MCF 10A (cell line): ENCODE measurements at regions of chr6 and their contacts with region 1.

Region 1: GRCh38 chr6:170224694-170225660 is 65.9 kb downstream of the DLL1 start:
- DNase-seq: peak; percentile 94
- H3K4me3 Mint-ChIP-seq: peak overlapping the region; percentile 60
- H3K27ac Mint-ChIP-seq: peak overlapping the region; percentile 81
- H3K4me1 Mint-ChIP-seq: peaks cover 51% of the 10 kb centered on the region
- H3K27me3 Mint-ChIP-seq: no peaks in the 10 kb centered on the region
- CTCF ChIP-seq: no peak

Region 2: GRCh38 chr6:170178561-170179477 is 46.2 kb before region 1 on chr6:
- CTCF ChIA-PET with region 1: interaction called, 4 read pairs
- POLR2A ChIA-PET with region 1: interaction called, 43 read pairs
- intact Hi-C with region 1: loop called (anchors 1 kb)
- DNase-seq: peak; percentile 97
- H3K4me3 Mint-ChIP-seq: peak overlapping the region; percentile 20
- H3K27ac Mint-ChIP-seq: peak overlapping the region; percentile 83
- H3K4me1 Mint-ChIP-seq: peaks cover 13% of the 10 kb centered on the region
- H3K27me3 Mint-ChIP-seq: peaks cover 22% of the 10 kb centered on the region
- CTCF ChIP-seq: no peak

Region 3: GRCh38 chr6:170271771-170272314 is 46.9 kb after region 1 on chr6:
- CTCF ChIA-PET with region 1: no interaction called
- POLR2A ChIA-PET with region 1: no interaction called
- intact Hi-C with region 1: no loop called
- DNase-seq: no peak
- H3K4me3 Mint-ChIP-seq: no peak overlapping the region
- H3K27ac Mint-ChIP-seq: no peak overlapping the region
- H3K4me1 Mint-ChIP-seq: no peaks in the 10 kb centered on the region
- H3K27me3 Mint-ChIP-seq: peaks cover 26% of the 10 kb centered on the region
- CTCF ChIP-seq: no peak

Region 4: DNA sequence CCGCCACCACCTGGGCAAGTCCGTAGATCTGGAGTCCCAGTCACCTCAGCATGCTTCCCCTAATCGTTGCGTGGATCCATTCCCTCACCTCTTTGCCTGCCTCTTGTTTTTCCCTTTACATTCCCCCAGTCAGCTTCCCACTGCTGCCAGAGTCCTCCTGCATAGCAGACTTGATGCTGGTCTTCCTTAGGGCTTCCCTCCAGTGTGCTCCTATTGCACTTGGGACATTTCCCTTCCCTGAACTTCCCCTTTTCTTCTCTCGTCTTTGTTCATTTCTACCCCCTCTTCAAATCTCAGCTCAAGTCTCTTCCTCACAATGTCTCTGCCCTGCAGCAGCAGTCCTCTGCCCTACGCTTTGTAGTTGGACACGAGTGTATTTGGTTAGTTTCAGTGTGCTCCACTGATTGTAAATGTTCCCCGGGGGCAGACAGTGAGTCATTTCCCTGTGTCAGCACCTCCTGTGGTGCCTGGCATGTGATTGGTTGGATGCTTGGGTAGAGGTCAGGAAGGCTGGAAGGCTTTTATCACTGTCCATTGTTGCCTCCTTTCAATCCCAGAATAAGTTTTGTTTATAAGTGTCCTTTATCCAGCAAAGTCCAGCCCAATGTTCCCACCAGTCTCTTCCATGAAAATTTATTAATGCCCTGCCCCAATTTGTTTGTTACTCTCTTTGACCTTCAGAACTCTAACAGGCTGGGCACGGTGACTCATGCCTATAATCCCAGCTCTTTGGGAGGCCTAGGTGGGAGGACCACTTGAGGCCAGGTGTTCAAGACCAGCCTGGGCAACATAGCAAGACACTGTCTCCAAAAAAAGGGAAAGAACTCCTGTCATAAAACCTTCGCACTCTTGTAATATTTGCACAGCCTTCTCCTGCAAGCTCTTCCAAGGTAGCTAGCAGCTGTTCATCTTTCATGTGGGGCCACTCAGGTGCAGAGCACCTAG is 119.9 kb after region 1 on chr6:
- CTCF ChIA-PET with region 1: no interaction called
- POLR2A ChIA-PET with region 1: no interaction called
- intact Hi-C with region 1: no loop called
- DNase-seq: peak; percentile 90
- H3K4me3 Mint-ChIP-seq: peak overlapping the region; percentile 0
- H3K27ac Mint-ChIP-seq: peak overlapping the region; percentile 7
- H3K4me1 Mint-ChIP-seq: peaks cover 13% of the 10 kb centered on the region
- H3K27me3 Mint-ChIP-seq: no peaks in the 10 kb centered on the region
- CTCF ChIP-seq: no peak